A673 (cell line): ENCODE measurements at regions of chr7 and their contacts with region 1.

Region 1: DNA sequence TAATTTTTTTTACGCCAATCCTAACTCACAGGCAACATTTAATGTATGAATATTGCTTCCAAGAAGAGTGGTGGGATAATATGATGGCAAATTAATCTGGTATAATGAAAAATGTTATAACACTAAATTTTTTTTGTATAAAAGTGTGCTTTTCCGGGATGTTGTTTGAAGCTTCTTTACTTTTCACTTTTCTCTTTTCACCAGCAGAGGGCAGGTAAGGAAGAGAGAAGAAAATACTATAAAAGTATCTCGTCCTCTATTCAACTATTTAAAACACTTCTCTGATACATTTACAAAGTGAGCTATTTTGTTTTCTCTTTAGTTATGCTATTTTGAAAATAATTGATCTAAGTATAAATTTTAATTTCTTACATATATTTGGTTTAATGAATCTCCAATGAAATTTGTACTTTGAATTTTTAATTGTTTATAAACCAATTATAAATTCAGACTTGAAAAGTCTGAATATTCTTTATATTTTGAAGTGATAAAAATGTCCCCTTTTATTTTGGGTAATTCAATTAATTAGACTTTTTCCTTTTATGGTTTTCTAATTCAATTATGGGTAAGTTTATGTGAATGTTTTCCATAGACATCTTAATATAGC is 20.7 kb upstream of the CFTR start:
- DNase-seq: peak; percentile 56
- H3K4me3 ChIP-seq: no peak overlapping the region
- H3K27ac ChIP-seq: no peak overlapping the region
- H3K4me1 ChIP-seq: no peaks in the 10 kb centered on the region
- H3K27me3 ChIP-seq: no peaks in the 10 kb centered on the region
- CTCF ChIP-seq: peak; percentile 76

Region 2: GRCh38 chr7:117673839-117674238 is 214.8 kb after region 1 on chr7:
- CTCF ChIA-PET with region 1: no interaction called
- POLR2A ChIA-PET with region 1: no interaction called
- intact Hi-C with region 1: loop called (anchors 2 kb)
- DNase-seq: peak; percentile 56
- H3K4me3 ChIP-seq: no peak overlapping the region
- H3K27ac ChIP-seq: no peak overlapping the region
- H3K4me1 ChIP-seq: no peaks in the 10 kb centered on the region
- H3K27me3 ChIP-seq: no peaks in the 10 kb centered on the region
- CTCF ChIP-seq: peak; percentile 64

Region 3: GRCh38 chr7:117715784-117716445 is 256.8 kb after region 1 on chr7:
- CTCF ChIA-PET with region 1: interaction called, 6 read pairs
- POLR2A ChIA-PET with region 1: no interaction called
- intact Hi-C with region 1: loop called (anchors 2 kb)
- DNase-seq: peak; percentile 78
- H3K4me3 ChIP-seq: no peak overlapping the region
- H3K27ac ChIP-seq: no peak overlapping the region
- H3K4me1 ChIP-seq: peaks cover 9% of the 10 kb centered on the region
- H3K27me3 ChIP-seq: no peaks in the 10 kb centered on the region
- CTCF ChIP-seq: peak; percentile 68

Region 4: DNA sequence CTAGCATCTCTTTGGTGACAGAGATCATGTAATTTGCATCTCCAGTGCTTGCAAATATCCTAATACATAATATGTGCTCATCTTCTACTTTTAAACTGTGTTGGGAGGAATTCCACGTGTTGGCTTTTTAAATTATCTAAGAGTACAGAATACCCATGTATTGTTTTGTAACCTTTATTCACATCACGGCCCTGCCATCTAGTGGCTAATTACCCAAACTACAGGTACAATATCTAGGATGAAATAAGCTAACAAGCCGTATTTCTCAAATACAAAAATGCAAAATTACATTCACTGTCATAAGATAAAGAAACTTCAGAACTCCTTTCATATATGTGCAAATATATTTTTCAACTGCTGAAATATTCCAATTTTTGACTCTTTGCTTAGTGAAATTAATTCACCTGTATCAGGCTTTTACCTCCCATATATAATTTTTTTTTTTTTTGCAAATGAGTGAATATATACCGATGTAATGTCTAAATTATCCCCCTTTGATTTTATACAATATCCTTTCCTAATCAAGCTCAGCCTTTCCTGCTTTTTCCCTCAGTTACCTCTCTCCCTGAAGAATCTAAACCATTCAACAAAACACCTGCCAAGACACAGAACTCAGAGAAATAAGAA is 694.6 kb after region 1 on chr7:
- CTCF ChIA-PET with region 1: no interaction called
- POLR2A ChIA-PET with region 1: no interaction called
- intact Hi-C with region 1: loop called (anchors 1 kb)
- DNase-seq: peak; percentile 77
- H3K4me3 ChIP-seq: no peak overlapping the region
- H3K27ac ChIP-seq: no peak overlapping the region
- H3K4me1 ChIP-seq: peaks cover 15% of the 10 kb centered on the region
- H3K27me3 ChIP-seq: no peaks in the 10 kb centered on the region
- CTCF ChIP-seq: peak; percentile 79